Upper lobe of right lung (tissue), 1 donor: ENCODE measurements at regions of chr11 and their contacts with region 1.

Region 1: DNA sequence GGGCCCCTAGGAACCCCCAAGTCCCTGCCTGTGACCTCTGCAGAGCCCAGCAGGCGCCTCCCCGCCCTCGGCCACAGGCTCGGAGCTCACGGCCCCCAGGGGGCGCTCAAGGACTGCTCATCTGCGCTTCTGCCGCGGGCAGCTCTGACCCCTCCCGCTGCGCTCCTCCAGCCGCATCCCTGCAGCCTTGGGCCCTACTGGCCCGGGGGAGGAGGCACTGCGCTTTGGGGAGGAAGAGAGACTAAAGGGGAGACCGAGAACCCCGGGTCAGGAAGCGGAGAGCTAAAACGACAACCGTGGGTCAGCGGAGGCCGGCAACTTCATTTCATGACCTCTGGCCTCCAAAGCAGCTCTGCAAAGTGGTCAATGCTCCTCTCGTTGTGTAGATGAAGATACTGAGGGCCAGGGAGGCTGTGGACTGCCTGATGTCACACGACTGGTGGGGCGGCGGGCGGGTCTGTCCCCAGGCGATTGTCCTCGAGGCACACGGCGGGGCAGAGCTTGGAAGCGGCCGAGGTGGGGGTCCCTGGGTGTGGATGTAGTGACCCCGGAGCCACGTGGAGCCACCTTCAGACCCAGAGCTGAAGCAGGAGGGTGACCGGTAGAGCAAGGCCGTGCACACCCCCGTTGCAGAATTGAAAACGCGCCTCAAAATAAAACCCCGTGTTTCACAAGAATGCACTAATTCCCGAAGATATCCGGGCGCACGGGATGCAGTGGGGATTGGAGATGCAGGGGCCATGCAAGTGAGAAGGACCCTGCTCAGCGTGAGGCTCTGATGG is 2.7 kb upstream of the KRTAP5-6 start:
- DNase-seq: peak; percentile 94
- ATAC-seq: peak; percentile 96
- H3K4me3 ChIP-seq: peak overlapping the region; percentile 25
- H3K27ac ChIP-seq: no peak overlapping the region
- H3K4me1 ChIP-seq: peaks cover 12% of the 10 kb centered on the region
- H3K27me3 ChIP-seq: no peaks in the 10 kb centered on the region
- CTCF ChIP-seq: peak; percentile 90

Region 2: GRCh38 chr11:1834062-1834610 is 139.9 kb after region 1 on chr11:
- intact Hi-C with region 1: loop called (anchors 2 kb)
- DNase-seq: peak; percentile 91
- ATAC-seq: peak; percentile 86
- H3K4me3 ChIP-seq: no peak overlapping the region
- H3K27ac ChIP-seq: peak overlapping the region; percentile 78
- H3K4me1 ChIP-seq: peaks cover 23% of the 10 kb centered on the region
- H3K27me3 ChIP-seq: no peaks in the 10 kb centered on the region
- CTCF ChIP-seq: no peak

Region 3: GRCh38 chr11:2151500-2152257 is 457.4 kb after region 1 on chr11:
- intact Hi-C with region 1: loop called (anchors 5 kb)
- DNase-seq: peak; percentile 80
- ATAC-seq: peak; percentile 75
- H3K4me3 ChIP-seq: no peak overlapping the region
- H3K27ac ChIP-seq: no peak overlapping the region
- H3K4me1 ChIP-seq: peaks cover 5% of the 10 kb centered on the region
- H3K27me3 ChIP-seq: peaks cover 43% of the 10 kb centered on the region
- CTCF ChIP-seq: peak; percentile 72